ENCODE measurements at regions of chr3 and their contacts with region 1.

Region 1: GRCh38 chr3:146544002-146544928 is at the start of gene PLSCR1:
- DNase-seq: peak; percentile 92 to 95
- H3K4me3 ChIP-seq: peak within 1 kb of the TSS; percentile 98
- H3K27ac ChIP-seq: peak within 1 kb of the TSS; percentile 95
- H3K4me1 ChIP-seq: peaks cover 26% of the 10 kb centered on the region
- H3K27me3 ChIP-seq: no peaks in the 10 kb centered on the region
- CTCF ChIP-seq: no peak
- total RNA-seq, gene PLSCR1: 60.1 and 64.0 TPM in 2 replicates

Region 2: GRCh38 chr3:146342989-146343388 is 201.3 kb before region 1 on chr3:
- CTCF ChIA-PET with region 1: no interaction called
- POLR2A ChIA-PET with region 1: no interaction called
- intact Hi-C with region 1: no loop called
- DNase-seq: no peak
- H3K4me3 ChIP-seq: no peak overlapping the region
- H3K27ac ChIP-seq: no peak overlapping the region
- H3K4me1 ChIP-seq: no peaks in the 10 kb centered on the region
- H3K27me3 ChIP-seq: no peaks in the 10 kb centered on the region
- CTCF ChIP-seq: no peak

Region 3: DNA sequence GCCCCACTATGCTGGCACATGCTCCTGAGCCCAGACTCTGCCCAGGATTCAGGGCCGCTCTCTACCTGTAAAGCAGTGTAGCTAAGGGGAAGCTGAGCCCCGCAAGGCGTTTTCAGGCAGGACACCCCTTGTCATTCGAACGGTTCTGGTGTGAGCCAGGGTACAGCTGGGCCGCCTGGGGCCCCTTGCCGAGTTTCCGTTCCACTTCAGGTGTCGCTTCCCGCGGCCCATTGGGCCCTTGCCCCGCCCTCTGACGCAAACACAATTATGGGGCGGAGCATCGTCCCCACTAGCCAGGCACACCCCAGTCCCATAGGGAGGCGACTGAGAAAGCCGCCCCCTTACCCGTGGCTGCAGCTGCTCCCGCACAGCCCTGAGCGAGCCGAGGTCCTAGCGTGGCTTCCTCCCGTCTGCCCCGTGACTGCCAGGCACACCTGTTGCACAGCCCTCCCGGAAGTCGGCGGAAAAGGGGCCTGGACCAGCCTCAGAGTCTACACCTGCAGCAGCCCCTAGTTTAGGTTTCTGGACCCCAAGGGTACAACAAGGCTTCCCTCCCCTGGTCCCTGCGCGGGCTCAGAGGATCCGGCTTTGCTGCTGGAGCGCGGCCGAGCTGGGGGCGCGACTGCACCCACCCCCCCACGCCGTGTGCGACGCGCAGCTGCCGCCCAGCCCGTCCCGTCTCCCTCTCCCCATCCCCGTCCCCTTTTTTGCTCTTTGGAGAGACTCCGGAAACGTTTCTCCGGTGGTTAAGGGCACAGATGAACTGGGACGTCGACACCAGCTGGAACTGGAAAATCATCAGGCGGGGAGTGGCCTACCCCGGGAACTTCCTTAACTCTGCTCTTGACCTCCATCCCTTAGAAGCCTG is 74.9 kb before region 1 on chr3 and contains the start of gene PLSCR2:
- CTCF ChIA-PET with region 1: no interaction called
- POLR2A ChIA-PET with region 1: interaction called, 5 read pairs
- intact Hi-C with region 1: loop called (anchors 1 kb)
- DNase-seq: peak in 1 of 2 experiments; percentile 50
- H3K4me3 ChIP-seq: peak within 1 kb of the TSS; percentile 35; the same call in 1 of the 2 replicates
- H3K27ac ChIP-seq: no peak within 1 kb of the TSS
- H3K4me1 ChIP-seq: 0 out of 2 replicates have a peak, but pooled peaks cover under 1% of the 10 kb centered on the region
- H3K27me3 ChIP-seq: no peaks in the 10 kb centered on the region
- CTCF ChIP-seq: no peak
- total RNA-seq, gene PLSCR2: not detected in 2 replicates

Region 4: DNA sequence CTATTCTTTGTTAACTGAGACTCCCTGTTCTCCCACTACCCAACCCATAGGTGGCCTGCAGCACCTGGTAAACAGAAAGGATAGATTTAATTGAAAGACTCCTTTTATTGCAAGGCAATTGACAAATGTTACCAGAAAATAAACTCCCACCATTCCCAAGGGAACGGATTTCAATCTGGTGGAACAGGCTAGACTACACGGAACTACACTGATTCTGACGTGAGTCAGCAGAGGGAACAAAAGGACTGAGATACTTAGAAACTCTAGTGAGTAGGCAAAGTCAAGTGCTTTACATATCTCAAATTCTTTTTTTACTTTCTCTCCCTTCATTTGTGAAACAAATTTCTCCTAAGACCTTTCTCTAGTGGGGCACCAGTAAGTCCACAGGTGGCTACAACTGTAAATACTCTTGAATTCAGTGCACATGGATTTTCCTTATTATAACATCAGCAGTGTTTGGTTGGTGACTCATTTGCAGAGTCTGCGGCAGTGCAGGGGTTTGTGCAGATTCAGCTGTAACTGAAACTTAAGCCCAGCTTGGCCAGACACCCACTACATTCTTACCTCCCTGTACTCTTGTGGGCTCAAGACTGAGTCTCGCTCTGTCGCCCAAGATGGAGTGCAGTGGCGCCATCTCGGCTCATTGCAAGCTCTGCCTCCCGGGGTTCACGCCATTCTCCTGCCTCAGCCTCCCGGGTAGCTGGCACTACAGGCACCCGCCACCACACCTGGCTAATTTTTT is 40.6 kb before region 1 on chr3:
- CTCF ChIA-PET with region 1: no interaction called
- POLR2A ChIA-PET with region 1: interaction called, 6 read pairs
- intact Hi-C with region 1: loop called (anchors 1 kb)
- DNase-seq: peak; percentile 70 to 93
- H3K4me3 ChIP-seq: peak overlapping the region; percentile 53
- H3K27ac ChIP-seq: peak overlapping the region; percentile 100
- H3K4me1 ChIP-seq: peaks cover 54% of the 10 kb centered on the region
- H3K27me3 ChIP-seq: no peaks in the 10 kb centered on the region
- CTCF ChIP-seq: peak; percentile 43; the same call in 1 of the 2 replicates

Region 5: GRCh38 chr3:146521394-146521793 is 22.9 kb before region 1 on chr3:
- CTCF ChIA-PET with region 1: no interaction called
- POLR2A ChIA-PET with region 1: interaction called, 3 read pairs
- intact Hi-C with region 1: loop called (anchors 2 kb)
- DNase-seq: no peak
- H3K4me3 ChIP-seq: no peak overlapping the region
- H3K27ac ChIP-seq: no peak overlapping the region
- H3K4me1 ChIP-seq: no peaks in the 10 kb centered on the region
- H3K27me3 ChIP-seq: no peaks in the 10 kb centered on the region
- CTCF ChIP-seq: no peak

Measured in PC-9 (cell line).